Right cardiac atrium (tissue), 5 donors: ENCODE measurements at regions of chr10 and their contacts with region 1.

Region 1: GRCh38 chr10:80205478-80206276 is at the start of gene ANXA11:
- DNase-seq: peak; percentile 82 to 95 (median 95)
- ATAC-seq: peak; percentile 78 to 86
- H3K4me3 ChIP-seq: peak within 1 kb of the TSS; percentile 97
- H3K27ac ChIP-seq: peak within 1 kb of the TSS; percentile 100
- H3K4me1 ChIP-seq: peaks cover 28% of the 10 kb centered on the region
- H3K27me3 ChIP-seq: no peaks in the 10 kb centered on the region
- total RNA-seq, gene ANXA11: 371 to 451 (median 403) TPM

Region 2: GRCh38 chr10:79507440-79508167 is 698.1 kb before region 1 on chr10:
- intact Hi-C with region 1: no loop called
- DNase-seq: no peak
- ATAC-seq: no peak
- H3K4me3 ChIP-seq: no peak overlapping the region
- H3K27ac ChIP-seq: no peak overlapping the region
- H3K4me1 ChIP-seq: peaks cover 1% of the 10 kb centered on the region
- H3K27me3 ChIP-seq: no peaks in the 10 kb centered on the region

Region 3: GRCh38 chr10:80144067-80144695 is 61.5 kb before region 1 on chr10:
- intact Hi-C with region 1: loop called in 2 of 4 experiments (anchors 5 kb)
- DNase-seq: peak in 2 of 3 donors; percentile 68 to 74
- ATAC-seq: peak; percentile 58 to 59
- H3K4me3 ChIP-seq: no peak overlapping the region
- H3K27ac ChIP-seq: no peak overlapping the region
- H3K4me1 ChIP-seq: no peaks in the 10 kb centered on the region
- H3K27me3 ChIP-seq: no peaks in the 10 kb centered on the region

Region 4: GRCh38 chr10:80158598-80159127 is 47.0 kb before region 1 on chr10:
- intact Hi-C with region 1: loop called in 1 of 4 experiments (anchors 5 kb)
- DNase-seq: peak; percentile 90 to 93 (median 91)
- ATAC-seq: peak; percentile 90 to 92
- H3K4me3 ChIP-seq: no peak overlapping the region
- H3K27ac ChIP-seq: peak overlapping the region; percentile 94
- H3K4me1 ChIP-seq: peaks cover 20% of the 10 kb centered on the region
- H3K27me3 ChIP-seq: no peaks in the 10 kb centered on the region

Region 5: DNA sequence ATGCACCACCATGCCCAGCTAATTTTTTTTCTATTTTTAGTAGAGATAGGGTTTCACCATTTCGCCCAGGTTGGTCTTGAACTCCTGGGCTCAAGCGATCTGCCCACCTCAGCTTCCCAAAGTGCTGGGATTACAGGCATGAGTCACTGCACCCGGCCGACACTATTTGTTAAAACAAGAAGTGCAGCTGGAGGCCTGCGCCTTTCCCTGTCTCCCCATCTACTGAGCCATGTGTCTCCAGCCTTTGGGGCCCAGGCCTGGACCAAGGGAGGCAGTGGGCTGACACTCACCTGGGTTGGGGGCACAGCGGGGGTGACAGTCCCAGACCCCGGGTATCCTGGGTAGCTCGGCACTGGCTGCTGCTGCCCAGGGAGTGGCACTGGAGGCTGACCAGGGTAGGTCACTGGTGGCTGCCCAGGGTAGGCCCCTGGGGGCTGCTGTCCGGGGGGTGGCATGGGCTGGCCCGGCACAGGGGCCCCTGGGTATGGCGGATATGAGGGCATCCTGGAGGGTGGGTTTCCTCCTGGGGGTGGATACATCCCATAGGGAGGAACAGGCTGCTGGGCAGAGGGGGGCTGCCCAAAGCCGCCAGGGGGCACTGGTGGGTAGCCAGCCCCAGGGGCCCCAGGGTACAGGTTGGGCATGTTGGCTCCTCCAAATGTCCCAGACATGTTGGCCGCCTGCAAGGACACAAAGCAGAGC is 36.8 kb before region 1 on chr10:
- intact Hi-C with region 1: loop called in 2 of 4 experiments (anchors 5 kb)
- DNase-seq: peak in 1 of 3 donors; percentile 16
- ATAC-seq: peak in 1 of 2 donors; percentile 1
- H3K4me3 ChIP-seq: no peak overlapping the region
- H3K27ac ChIP-seq: peak overlapping the region; percentile 11
- H3K4me1 ChIP-seq: peaks cover 45% of the 10 kb centered on the region
- H3K27me3 ChIP-seq: no peaks in the 10 kb centered on the region